ENCODE measurements at regions of chr6 and their contacts with region 1.

Region 1: GRCh38 chr6:12962987-12963386 is 246.4 kb downstream of the PHACTR1 start:
- DNase-seq: no peak

Region 2: GRCh38 chr6:13006578-13007300 is 43.8 kb after region 1 on chr6:
- intact Hi-C with region 1: loop called (anchors 5 kb)
- DNase-seq: no peak